AG04450 (cell line): ENCODE measurements at regions of chr1 and their contacts with region 1.

Region 1: GRCh38 chr1:101540161-101540560 is 303.3 kb downstream of the S1PR1 start:
- DNase-seq: no peak
- H3K4me3 ChIP-seq: no peak overlapping the region
- H3K27ac ChIP-seq: no peak overlapping the region
- H3K27me3 ChIP-seq: no peaks in the 10 kb centered on the region
- CTCF ChIP-seq: no peak

Region 2: DNA sequence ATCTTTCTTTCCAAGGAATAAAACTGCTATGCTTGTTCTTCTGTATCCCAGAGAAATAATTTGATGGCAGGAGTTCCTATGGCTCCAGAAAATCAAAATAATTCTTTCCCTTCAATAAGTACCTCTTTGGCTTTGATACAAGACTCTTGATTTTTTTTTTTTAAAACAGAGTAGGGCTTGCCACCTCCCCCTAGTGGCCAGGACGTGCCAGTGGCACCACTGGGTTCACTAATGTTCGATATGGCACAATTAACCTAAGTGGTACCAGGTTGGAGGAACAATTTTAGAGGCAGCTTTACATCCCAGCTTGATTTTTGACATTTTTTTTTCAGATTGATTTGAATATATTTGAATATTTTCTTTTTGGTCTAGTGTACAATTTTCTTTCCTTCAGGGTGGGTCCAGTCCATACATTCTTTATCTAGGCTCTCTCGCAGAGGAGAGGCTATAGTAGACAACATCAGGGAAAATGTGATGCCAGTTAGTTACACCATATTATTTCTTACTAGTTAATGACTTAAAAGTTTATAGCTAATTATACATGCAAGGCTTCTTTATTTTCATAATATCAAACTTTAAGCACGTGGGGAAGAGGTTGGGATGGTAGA is 27.5 kb after region 1 on chr1:
- CTCF ChIA-PET with region 1: interaction called, 12 read pairs
- POLR2A ChIA-PET with region 1: no interaction called
- DNase-seq: no peak
- H3K4me3 ChIP-seq: no peak overlapping the region
- H3K27ac ChIP-seq: no peak overlapping the region
- H3K27me3 ChIP-seq: no peaks in the 10 kb centered on the region
- CTCF ChIP-seq: peak; percentile 98